Activated naive CD8-positive, alpha-beta T cell treated with anti-CD3 and anti-CD28 coated beads, Interleukin-2, amount 10 ng/mL, durations not matched to agents 7 days and 5 days (primary cell): ENCODE measurements at regions of chr12 and their contacts with region 1.

Region 1: DNA sequence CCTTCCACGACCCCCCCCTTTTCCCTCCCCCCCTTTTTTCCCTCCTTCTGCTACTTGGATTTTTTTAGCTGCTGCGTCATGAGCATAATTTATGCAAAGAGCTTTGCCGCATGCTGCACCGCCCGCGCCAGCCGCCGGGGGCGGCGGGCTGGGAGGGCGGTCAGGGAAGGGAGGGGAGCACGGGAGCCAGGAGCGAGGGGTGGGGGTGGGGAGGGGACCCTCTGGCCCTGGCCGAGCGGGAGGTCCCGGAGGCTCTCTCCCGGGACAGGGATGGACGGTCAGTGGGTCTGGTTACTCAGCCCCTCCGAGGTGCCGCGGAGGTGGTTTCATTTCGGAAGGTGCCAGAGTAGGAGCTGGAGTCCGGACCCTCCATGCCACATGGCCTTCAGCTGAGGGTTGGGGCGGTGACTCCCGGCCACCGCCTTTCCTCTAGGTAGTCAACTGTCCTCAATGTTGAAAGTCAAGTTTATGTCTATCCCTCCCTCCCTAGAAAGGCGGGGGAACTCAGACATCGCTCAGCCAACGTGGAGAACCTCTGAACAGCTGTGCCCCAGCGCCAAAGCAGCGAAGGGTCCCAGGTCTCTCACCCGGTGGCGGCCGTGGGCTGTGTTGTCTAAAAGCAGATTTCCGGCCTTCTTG is at the start of gene POU6F1:
- DNase-seq: peak; percentile 78
- ATAC-seq: peak; percentile 80
- H3K4me3 Mint-ChIP-seq: peak within 1 kb of the TSS; percentile 71
- H3K27ac Mint-ChIP-seq: peak within 1 kb of the TSS; percentile 67
- H3K4me1 Mint-ChIP-seq: peaks cover 8% of the 10 kb centered on the region
- H3K27me3 Mint-ChIP-seq: no peaks in the 10 kb centered on the region
- total RNA-seq, gene POU6F1: 20.6 to 21.8 TPM

Region 2: DNA sequence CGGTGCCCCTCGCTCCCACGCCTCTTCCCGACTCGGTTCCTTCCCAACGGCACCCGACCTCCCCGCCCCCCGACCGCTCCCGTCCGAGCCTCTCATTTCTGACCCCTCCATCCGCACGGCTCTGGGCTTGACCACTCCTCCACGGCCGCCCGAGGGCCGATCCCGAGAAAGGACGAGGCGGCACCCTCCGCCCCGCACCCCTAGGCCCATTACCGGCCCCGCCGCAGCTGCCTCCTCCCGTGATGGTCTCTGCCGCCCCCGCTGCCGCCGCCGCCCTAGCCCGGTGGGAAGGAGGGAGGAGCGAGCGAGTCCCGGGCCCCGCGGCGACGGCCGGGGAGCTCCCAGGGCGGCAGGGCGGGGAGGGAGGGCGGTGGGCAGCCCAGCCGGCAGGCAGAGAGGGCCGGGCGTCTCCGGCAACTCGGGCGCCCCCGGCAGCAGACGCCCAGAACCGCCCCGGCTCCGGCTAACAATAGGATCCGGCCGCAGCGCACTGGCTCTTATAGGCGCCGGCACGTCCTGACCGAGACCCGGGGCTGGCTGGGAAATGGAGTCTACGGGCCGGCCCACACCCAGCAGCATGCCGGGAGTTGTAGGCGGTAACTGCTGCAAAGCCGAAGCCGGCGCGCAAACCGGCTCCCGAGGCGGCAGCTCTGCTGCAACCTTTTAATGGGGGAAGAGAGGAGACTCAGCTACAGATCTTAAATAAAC is 134.8 kb before region 1 on chr12 and contains the start of gene CSRNP2:
- POLR2A ChIA-PET with region 1: interaction called, 12 read pairs
- DNase-seq: peak; percentile 96
- ATAC-seq: peak; percentile 99
- H3K4me3 Mint-ChIP-seq: peak within 1 kb of the TSS; percentile 97
- H3K27ac Mint-ChIP-seq: peak within 1 kb of the TSS; percentile 90
- H3K4me1 Mint-ChIP-seq: peaks cover 24% of the 10 kb centered on the region
- H3K27me3 Mint-ChIP-seq: no peaks in the 10 kb centered on the region
- total RNA-seq, gene CSRNP2: 20.0 to 24.4 TPM

Region 3: GRCh38 chr12:51307655-51308593 is 89.8 kb after region 1 on chr12:
- POLR2A ChIA-PET with region 1: no interaction called
- DNase-seq: no peak
- ATAC-seq: no peak
- H3K4me3 Mint-ChIP-seq: no peak overlapping the region
- H3K27ac Mint-ChIP-seq: peak overlapping the region; percentile 40
- H3K4me1 Mint-ChIP-seq: peaks cover 10% of the 10 kb centered on the region
- H3K27me3 Mint-ChIP-seq: no peaks in the 10 kb centered on the region